ENCODE measurements at regions of chr18 and their contacts with region 1.

Region 1: DNA sequence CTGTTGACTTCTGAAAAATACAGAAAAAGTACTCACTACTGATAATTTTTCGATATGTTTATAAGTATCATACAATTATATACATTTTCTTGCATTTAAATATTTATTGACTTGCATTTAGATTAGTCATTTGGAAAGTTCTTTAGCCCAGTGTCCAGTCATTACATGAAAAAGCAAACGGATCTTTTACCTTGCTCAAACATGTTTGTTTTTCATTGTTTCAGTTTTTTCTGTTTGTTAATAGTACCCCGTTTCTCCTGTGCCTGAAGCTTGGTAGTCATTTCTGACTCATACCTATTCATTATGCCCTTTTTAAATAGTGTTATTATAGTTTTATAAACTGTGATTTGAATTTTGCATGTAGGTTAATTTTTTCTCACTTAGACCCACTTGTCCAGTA is 28.1 kb downstream of the CEP192 start:
- DNase-seq: no peak
- ATAC-seq: no peak
- H3K4me3 ChIP-seq: no peak overlapping the region
- H3K27ac ChIP-seq: no peak overlapping the region
- H3K4me1 ChIP-seq: peaks cover 0 to 10% (median 0%) of the 10 kb centered on the region in 9 donors
- H3K27me3 ChIP-seq: no peaks in the 10 kb centered on the region
- CTCF ChIP-seq: no peak

Region 2: GRCh38 chr18:13067124-13067523 is 47.8 kb after region 1 on chr18:
- intact Hi-C with region 1: no loop called
- DNase-seq: no peak
- ATAC-seq: no peak
- H3K4me3 ChIP-seq: no peak overlapping the region
- H3K27ac ChIP-seq: no peak overlapping the region
- H3K4me1 ChIP-seq: peaks cover 0 to 8% (median 0%) of the 10 kb centered on the region in 9 donors
- H3K27me3 ChIP-seq: no peaks in the 10 kb centered on the region
- CTCF ChIP-seq: no peak

Region 3: GRCh38 chr18:13095466-13095865 is 76.2 kb after region 1 on chr18:
- intact Hi-C with region 1: loop called in 1 of 10 experiments (anchors 10 kb)
- DNase-seq: no peak
- ATAC-seq: no peak
- H3K4me3 ChIP-seq: no peak overlapping the region
- H3K27ac ChIP-seq: no peak overlapping the region
- H3K4me1 ChIP-seq: peaks cover 0 to under 1% (median 0%) of the 10 kb centered on the region in 9 donors
- H3K27me3 ChIP-seq: no peaks in the 10 kb centered on the region
- CTCF ChIP-seq: no peak

Measured in heart right ventricle (tissue), 16 donors.